ENCODE measurements at regions of chr1 and their contacts with region 1.

Region 1: GRCh38 chr1:117895482-117896114 is 33.8 kb downstream of the GDAP2 start:
- DNase-seq: peak; percentile 42 to 75
- ATAC-seq: peak; percentile 56

Region 2: GRCh38 chr1:117512743-117513321 is 382.8 kb before region 1 on chr1:
- intact Hi-C with region 1: loop called in 1 of 2 experiments (anchors 5 kb)
- DNase-seq: no peak
- ATAC-seq: peak; percentile 54

Measured in left colon (tissue), 2 donors.